MCF 10A (cell line): ENCODE measurements at regions of chr22 and their contacts with region 1.

Region 1: DNA sequence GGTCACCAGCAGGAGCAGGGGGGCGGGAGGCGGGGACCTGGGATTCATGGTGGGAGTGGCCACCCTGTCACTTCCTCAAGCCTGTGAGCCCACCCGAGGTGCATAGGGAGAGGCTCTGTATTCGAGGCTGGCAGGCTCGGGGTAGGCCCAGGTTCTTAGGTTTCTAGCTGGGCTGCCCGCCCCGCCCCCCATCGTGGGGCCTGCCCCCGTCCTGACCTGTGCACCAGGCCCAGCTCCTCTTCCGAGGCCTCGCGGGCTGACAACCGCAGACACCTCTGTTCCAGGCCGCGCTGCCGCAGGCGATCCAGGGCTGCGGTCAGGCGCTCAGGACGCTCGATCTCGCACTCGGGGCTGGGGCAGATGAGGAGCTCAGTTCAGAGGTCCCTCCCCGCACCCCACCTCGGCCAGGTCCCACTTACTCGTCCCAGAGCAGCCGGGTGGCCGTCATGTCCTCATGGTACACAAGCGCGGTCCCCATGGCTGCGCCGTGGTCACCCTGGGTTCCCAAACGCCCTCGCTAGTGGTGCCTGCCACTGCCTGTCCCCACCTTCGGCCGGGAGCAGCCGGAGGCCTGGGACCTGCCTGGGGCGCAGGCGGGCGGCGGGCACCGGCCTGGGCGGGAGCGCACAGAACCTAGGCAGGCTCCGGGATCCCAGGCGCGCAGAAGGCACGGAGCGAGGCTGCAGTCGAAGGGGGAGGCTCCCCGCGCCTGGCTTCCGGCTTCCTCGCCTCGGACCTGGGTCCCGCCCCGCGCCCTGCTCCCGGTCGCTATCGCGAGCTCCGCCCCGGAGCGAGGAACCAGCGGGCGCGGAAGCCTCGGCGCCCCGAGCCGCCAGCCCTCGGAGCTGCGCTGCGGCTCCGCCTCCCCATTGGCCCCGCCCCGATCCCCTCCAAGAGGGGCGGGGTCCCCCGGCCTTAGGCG is at the start of gene HDAC10:
- DNase-seq: peak; percentile 68
- H3K4me3 Mint-ChIP-seq: peak within 1 kb of the TSS; percentile 72
- H3K27ac Mint-ChIP-seq: no peak within 1 kb of the TSS
- H3K4me1 Mint-ChIP-seq: no peaks in the 10 kb centered on the region
- H3K27me3 Mint-ChIP-seq: no peaks in the 10 kb centered on the region
- CTCF ChIP-seq: no peak
- total RNA-seq, gene HDAC10: 27.5 and 29.2 TPM in 2 replicates

Region 2: GRCh38 chr22:50089682-50090411 is 161.0 kb before region 1 on chr22 and contains the start of gene MOV10L1:
- CTCF ChIA-PET with region 1: no interaction called
- POLR2A ChIA-PET with region 1: no interaction called
- intact Hi-C with region 1: no loop called
- DNase-seq: no peak
- H3K4me3 Mint-ChIP-seq: no peak within 1 kb of the TSS
- H3K27ac Mint-ChIP-seq: no peak within 1 kb of the TSS
- H3K4me1 Mint-ChIP-seq: no peaks in the 10 kb centered on the region
- H3K27me3 Mint-ChIP-seq: peaks cover 8% of the 10 kb centered on the region
- CTCF ChIP-seq: no peak
- total RNA-seq, gene MOV10L1: not detected in 2 replicates

Region 3: GRCh38 chr22:50260801-50261614 is 10.2 kb after region 1 on chr22:
- CTCF ChIA-PET with region 1: interaction called, 9 read pairs
- POLR2A ChIA-PET with region 1: interaction called, 11 read pairs
- intact Hi-C with region 1: no loop called
- DNase-seq: peak; percentile 57
- H3K4me3 Mint-ChIP-seq: peak overlapping the region; percentile 61
- H3K27ac Mint-ChIP-seq: no peak overlapping the region
- H3K4me1 Mint-ChIP-seq: peaks cover 5% of the 10 kb centered on the region
- H3K27me3 Mint-ChIP-seq: no peaks in the 10 kb centered on the region
- CTCF ChIP-seq: no peak

Region 4: DNA sequence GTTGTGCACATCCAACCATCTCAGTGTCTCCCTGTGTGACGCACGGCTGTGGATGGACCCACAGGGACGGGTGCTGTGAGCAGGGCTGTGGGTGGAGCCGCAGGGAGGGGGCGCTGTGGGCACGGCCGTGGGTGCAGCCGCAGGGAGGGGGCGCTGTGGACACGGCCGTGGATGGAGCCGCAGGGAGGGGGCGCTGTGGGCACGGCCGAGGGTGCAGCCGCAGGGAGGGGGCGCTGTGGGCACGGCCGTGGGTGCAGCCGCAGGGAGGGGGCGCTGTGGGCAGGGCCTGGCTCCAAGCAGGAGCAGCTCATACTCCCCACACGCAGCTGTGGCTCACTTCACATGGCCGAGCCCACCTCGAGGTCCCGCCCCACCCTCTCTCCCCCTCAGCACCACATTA is 25.3 kb after region 1 on chr22:
- CTCF ChIA-PET with region 1: interaction called, 27 read pairs
- POLR2A ChIA-PET with region 1: interaction called, 10 read pairs
- intact Hi-C with region 1: no loop called
- DNase-seq: no peak
- H3K4me3 Mint-ChIP-seq: no peak overlapping the region
- H3K27ac Mint-ChIP-seq: no peak overlapping the region
- H3K4me1 Mint-ChIP-seq: peaks cover 6% of the 10 kb centered on the region
- H3K27me3 Mint-ChIP-seq: no peaks in the 10 kb centered on the region
- CTCF ChIP-seq: peak; percentile 64

Region 5: DNA sequence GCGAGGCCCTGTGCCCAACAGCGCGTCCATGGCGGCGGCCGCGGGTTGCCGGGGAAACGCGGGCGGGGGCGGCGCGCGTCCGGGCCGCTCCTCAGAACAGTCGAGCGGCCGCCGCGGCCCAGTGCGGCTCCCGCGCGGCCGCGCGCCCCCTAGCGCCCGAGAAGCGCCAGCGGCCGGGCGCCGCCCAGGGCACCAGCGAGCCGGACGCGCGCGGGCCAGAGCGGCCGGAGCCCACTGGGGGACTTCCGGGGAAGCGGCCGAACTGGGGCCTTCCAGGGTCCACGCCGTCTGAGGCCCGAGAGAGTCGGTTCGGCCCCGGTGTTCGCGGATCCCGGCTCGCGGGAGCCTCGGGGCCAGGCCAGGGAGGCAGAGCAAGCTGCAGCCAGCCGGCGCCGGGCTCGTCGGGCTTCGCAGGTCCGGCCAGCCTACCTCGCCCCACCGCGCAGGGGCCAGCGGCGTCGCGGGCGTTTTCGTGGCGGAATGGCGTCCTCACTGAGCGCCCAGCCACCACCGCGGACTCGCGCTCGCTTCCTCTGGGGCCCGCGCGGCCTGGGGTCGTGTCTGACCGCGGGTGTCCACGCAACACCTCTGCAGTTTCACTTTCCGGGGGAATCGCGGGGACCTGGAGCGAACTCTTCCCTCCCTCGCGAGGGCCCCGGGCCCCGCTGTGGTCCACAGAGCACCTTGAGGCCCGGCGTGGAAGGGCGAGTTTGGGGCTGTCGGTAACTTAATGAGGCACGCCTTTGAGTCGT is 76.3 kb after region 1 on chr22 and contains the start of gene DENND6B:
- CTCF ChIA-PET with region 1: interaction called, 27 read pairs
- POLR2A ChIA-PET with region 1: interaction called, 5 read pairs
- intact Hi-C with region 1: no loop called
- DNase-seq: peak; percentile 68
- H3K4me3 Mint-ChIP-seq: peak within 1 kb of the TSS; percentile 84
- H3K27ac Mint-ChIP-seq: peak within 1 kb of the TSS; percentile 49
- H3K4me1 Mint-ChIP-seq: peaks cover 18% of the 10 kb centered on the region
- H3K27me3 Mint-ChIP-seq: no peaks in the 10 kb centered on the region
- CTCF ChIP-seq: peak; percentile 42
- total RNA-seq, gene DENND6B: 4.0 and 5.5 TPM in 2 replicates

Region 6: DNA sequence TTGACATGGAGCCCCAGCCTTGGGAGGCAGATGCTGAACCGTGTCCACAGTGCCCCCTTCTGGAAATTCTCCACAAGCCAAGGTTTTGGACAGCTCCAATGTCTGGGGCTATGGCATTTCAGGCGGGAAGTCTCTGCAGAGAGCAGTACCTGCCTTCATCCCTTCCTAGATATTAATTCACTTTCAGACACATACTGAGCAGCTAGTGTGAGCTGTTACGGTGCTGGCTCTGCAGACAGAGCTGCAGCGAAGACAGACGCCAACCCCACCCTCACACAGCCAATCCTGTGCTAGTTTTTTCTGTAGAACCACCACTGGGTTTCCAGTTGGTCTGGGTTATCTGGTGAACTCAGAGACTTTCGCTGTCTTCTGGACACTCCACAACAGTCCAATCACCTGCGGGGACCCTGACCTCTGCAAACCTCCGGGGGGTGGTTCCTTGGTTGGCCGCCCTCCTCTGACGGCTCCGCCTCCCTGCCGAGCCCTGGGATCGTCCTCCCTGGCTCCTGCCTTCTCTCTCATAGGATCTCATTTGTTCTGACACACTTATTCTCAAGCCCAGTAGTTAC is 247.6 kb after region 1 on chr22:
- CTCF ChIA-PET with region 1: interaction called, 6 read pairs
- POLR2A ChIA-PET with region 1: no interaction called
- intact Hi-C with region 1: loop called (anchors 5 kb)
- DNase-seq: peak; percentile 84
- H3K4me3 Mint-ChIP-seq: no peak overlapping the region
- H3K27ac Mint-ChIP-seq: no peak overlapping the region
- H3K4me1 Mint-ChIP-seq: peaks cover 7% of the 10 kb centered on the region
- H3K27me3 Mint-ChIP-seq: no peaks in the 10 kb centered on the region
- CTCF ChIP-seq: peak; percentile 64